Activated B cell treated with CpG ODN at 0.5 μM for 24 hours (primary cell): ENCODE measurements at regions of chr19 and their contacts with region 1.

Region 1: GRCh38 chr19:8252922-8253589 is 43.9 kb downstream of the CERS4 start:
- DNase-seq: peak; percentile 82
- ATAC-seq: peak; percentile 95
- H3K4me3 Mint-ChIP-seq: no peak overlapping the region
- H3K27ac Mint-ChIP-seq: peak overlapping the region; percentile 71
- H3K4me1 Mint-ChIP-seq: peaks cover 3% of the 10 kb centered on the region
- H3K27me3 Mint-ChIP-seq: no peaks in the 10 kb centered on the region
- CTCF ChIP-seq: peak; percentile 75

Region 2: DNA sequence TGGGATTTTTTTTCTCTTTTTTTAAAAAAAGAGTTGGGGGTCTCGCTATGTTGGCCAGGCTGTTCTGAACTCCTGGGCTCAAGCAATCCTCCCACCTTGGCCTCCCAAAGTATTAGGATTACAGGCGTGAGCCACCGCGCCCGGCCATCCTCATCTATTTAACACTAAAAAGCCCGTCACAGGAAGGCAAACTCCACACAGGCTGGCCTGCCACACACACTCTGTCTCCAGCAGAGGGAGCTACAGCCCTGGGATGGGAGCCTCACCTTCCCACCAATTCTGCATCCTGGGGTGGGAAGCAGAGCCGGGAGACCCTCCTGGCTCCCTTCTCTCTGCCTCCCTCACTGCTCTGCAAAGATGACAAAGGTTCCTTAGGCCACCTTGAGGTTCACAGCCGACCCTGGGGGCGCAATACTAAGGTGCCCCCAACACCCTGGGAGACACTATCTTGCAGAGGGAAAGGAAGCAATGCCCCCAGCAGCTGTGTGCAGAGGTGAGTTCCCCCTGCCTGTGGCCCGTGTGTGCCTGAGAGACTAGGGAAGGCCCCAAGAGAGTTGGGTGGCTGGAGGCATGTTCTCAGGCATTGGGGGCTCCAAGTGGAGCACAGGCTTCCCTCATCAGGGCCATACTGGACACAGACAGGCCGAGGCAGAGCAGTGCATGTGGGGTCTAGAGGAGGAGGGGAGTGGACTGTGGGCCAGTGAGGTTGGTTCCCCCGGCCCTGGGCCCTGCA is 282.2 kb before region 1 on chr19:
- CTCF ChIA-PET with region 1: no interaction called
- POLR2A ChIA-PET with region 1: no interaction called
- intact Hi-C with region 1: loop called (anchors 1 kb)
- DNase-seq: peak; percentile 17
- ATAC-seq: peak; percentile 56
- H3K4me3 Mint-ChIP-seq: no peak overlapping the region
- H3K27ac Mint-ChIP-seq: no peak overlapping the region
- H3K4me1 Mint-ChIP-seq: peaks cover 1% of the 10 kb centered on the region
- H3K27me3 Mint-ChIP-seq: no peaks in the 10 kb centered on the region
- CTCF ChIP-seq: no peak

Region 3: GRCh38 chr19:8017808-8018207 is 235.2 kb before region 1 on chr19:
- CTCF ChIA-PET with region 1: no interaction called
- POLR2A ChIA-PET with region 1: no interaction called
- intact Hi-C with region 1: loop called (anchors 1 kb)
- DNase-seq: peak; percentile 25
- ATAC-seq: peak; percentile 100
- H3K4me3 Mint-ChIP-seq: no peak overlapping the region
- H3K27ac Mint-ChIP-seq: peak overlapping the region; percentile 19
- H3K4me1 Mint-ChIP-seq: peaks cover 13% of the 10 kb centered on the region
- H3K27me3 Mint-ChIP-seq: no peaks in the 10 kb centered on the region
- CTCF ChIP-seq: no peak

Region 4: GRCh38 chr19:8069096-8069973 is 183.7 kb before region 1 on chr19:
- CTCF ChIA-PET with region 1: no interaction called
- POLR2A ChIA-PET with region 1: no interaction called
- intact Hi-C with region 1: no loop called
- DNase-seq: no peak
- ATAC-seq: no peak
- H3K4me3 Mint-ChIP-seq: no peak overlapping the region
- H3K27ac Mint-ChIP-seq: no peak overlapping the region
- H3K4me1 Mint-ChIP-seq: no peaks in the 10 kb centered on the region
- H3K27me3 Mint-ChIP-seq: peaks cover 4% of the 10 kb centered on the region
- CTCF ChIP-seq: no peak

Region 5: DNA sequence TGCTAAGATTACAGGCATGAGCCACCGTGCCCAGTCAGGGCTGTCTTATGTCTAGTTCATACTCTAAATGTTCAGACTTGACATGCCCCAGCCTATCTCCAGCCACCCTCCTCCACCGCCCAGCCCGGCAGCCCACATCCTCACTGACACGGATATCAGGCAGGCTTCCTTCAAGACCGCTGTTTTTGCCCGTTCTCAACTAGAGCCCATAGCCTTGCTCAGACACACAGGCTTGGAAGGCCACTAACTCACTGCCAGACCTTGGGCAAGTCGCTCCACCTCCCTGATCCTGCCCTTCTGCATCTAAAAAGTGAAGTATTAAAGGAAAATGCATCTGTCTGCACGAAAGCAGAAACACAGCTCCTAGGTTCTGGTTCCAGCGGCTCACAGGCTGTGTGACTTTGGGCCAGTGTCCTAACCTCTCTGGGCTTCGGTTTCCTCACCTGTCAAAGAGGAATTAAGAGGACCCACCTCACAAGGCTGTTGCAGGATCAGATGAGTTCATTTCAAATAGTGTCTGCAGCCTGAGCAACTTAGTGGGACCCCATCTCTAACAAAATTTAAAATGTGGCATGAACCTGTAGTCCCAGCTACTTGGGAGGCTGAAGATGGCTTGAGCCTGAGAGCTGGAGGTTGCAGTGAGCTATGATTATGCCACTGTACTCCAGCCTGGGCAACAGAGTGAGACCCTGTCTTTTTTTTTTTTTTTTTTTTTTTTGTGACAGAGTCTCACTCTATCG is 58.4 kb before region 1 on chr19:
- CTCF ChIA-PET with region 1: interaction called, 3 read pairs
- POLR2A ChIA-PET with region 1: interaction called, 3 read pairs
- intact Hi-C with region 1: loop called (anchors 2 kb)
- DNase-seq: peak; percentile 44
- ATAC-seq: peak; percentile 18
- H3K4me3 Mint-ChIP-seq: peak overlapping the region; percentile 80
- H3K27ac Mint-ChIP-seq: peak overlapping the region; percentile 97
- H3K4me1 Mint-ChIP-seq: peaks cover 65% of the 10 kb centered on the region
- H3K27me3 Mint-ChIP-seq: no peaks in the 10 kb centered on the region
- CTCF ChIP-seq: no peak

Region 6: DNA sequence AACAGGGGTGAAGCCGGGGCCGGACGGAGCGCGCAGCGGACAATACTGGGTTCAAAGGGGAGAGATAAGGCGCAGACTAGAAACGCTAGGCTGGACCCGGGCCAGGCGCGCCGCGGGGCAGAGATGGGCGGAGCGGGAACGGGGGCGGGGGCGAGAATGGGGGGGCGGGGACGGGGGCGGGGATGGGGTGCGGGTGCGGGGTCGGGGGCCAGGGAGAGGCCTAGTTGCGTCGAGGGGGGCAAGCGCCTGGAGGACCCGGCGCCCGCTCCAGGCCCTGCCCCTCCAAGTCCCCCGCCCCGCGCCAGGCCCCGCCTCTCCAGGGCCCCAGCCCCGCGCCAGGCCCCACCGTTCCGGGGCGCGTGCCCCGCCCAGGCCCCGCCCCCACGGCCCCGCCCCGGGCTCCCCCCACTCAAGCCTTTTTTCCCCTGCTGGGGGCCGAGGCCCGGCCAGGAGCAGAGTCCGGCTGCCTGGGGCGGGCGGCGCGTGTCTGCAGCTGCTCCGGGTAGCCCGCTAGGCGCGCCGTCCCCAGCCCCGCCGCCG is 44.1 kb before region 1 on chr19 and contains the start of gene CERS4:
- CTCF ChIA-PET with region 1: no interaction called
- POLR2A ChIA-PET with region 1: interaction called, 8 read pairs
- intact Hi-C with region 1: loop called (anchors 2 kb)
- DNase-seq: peak; percentile 81
- ATAC-seq: peak; percentile 86
- H3K4me3 Mint-ChIP-seq: peak within 1 kb of the TSS; percentile 96
- H3K27ac Mint-ChIP-seq: peak within 1 kb of the TSS; percentile 81
- H3K4me1 Mint-ChIP-seq: peaks cover 53% of the 10 kb centered on the region
- H3K27me3 Mint-ChIP-seq: no peaks in the 10 kb centered on the region
- CTCF ChIP-seq: no peak
- total RNA-seq, gene CERS4: 112 and 114 TPM in 2 replicates

Region 7: GRCh38 chr19:8487137-8487851 is 234.2 kb after region 1 on chr19:
- CTCF ChIA-PET with region 1: no interaction called
- POLR2A ChIA-PET with region 1: no interaction called
- intact Hi-C with region 1: no loop called
- DNase-seq: no peak
- ATAC-seq: peak; percentile 67
- H3K4me3 Mint-ChIP-seq: peak overlapping the region; percentile 19
- H3K27ac Mint-ChIP-seq: peak overlapping the region; percentile 81
- H3K4me1 Mint-ChIP-seq: peaks cover 23% of the 10 kb centered on the region
- H3K27me3 Mint-ChIP-seq: no peaks in the 10 kb centered on the region
- CTCF ChIP-seq: no peak